HCT116 (cell line): ENCODE measurements at regions of chr6 and their contacts with region 1.

Region 1: DNA sequence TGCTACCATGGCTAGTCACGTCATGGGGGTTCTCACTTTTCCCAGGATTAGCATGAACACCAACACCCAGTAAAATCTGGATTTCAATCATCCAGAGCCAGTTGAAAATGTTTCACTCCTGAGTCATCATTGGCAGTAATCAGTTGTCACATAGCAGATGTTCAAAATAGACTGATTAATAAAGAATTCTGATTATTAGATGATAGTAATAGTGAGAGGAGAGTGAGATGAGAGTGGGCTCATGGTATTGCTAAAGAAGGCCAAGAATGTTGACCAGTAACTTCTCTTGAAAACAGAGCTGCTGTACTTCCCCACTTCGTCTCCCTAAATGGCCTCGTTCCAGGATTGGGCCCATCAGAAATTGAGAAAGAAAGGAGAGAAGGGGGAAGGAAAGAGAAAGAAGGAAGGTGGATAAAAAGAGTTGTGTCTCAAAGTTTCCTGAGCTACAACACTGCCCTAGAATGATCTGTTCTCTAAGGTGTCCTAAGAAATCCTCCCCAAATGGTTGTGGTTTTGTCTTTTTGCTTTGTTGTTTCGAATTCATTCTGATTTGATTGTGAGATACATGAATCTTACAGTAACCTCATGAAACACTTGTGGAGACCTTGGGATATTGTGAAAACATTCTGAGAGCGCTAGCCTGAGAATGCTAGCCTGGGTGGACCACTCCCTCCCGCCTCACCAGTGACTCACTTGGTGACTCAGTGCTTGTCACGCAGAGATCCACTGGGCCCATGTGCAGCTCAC is 502.2 kb upstream of the JARID2 start:
- DNase-seq: peak; percentile 94
- ATAC-seq: peak; percentile 95
- H3K4me3 ChIP-seq: peak overlapping the region in 1 of 2 experiments; percentile 33; a peak in 2 of 4 replicates
- H3K27ac ChIP-seq: peak overlapping the region; percentile 94
- H3K4me1 ChIP-seq: peaks cover 18 to 36% of the 10 kb centered on the region in 2 experiments
- H3K27me3 ChIP-seq: no peaks in the 10 kb centered on the region
- CTCF ChIP-seq: no peak
- POLR2A ChIP-seq: no peak
- RAD21 ChIP-seq: peak; percentile 19; the same call in 1 of the 2 replicates

Region 2: GRCh38 chr6:14270925-14271791 is 472.5 kb before region 1 on chr6:
- CTCF ChIA-PET with region 1: no interaction called
- POLR2A ChIA-PET with region 1: no interaction called
- RAD21 ChIA-PET with region 1: interaction called in 1 of 2 experiments, 3 read pairs
- intact Hi-C with region 1: loop called (anchors 1 kb)
- DNase-seq: peak; percentile 99
- ATAC-seq: peak; percentile 93
- H3K4me3 ChIP-seq: peak overlapping the region in 1 of 2 experiments; percentile 25; a peak in 2 of 4 replicates
- H3K27ac ChIP-seq: peak overlapping the region; percentile 72
- H3K4me1 ChIP-seq: peaks cover 26 to 52% of the 10 kb centered on the region in 2 experiments
- H3K27me3 ChIP-seq: no peaks in the 10 kb centered on the region
- CTCF ChIP-seq: no peak
- POLR2A ChIP-seq: no peak
- RAD21 ChIP-seq: peak; percentile 41

Region 3: GRCh38 chr6:15473741-15474161 is 730.1 kb after region 1 on chr6:
- CTCF ChIA-PET with region 1: no interaction called
- POLR2A ChIA-PET with region 1: no interaction called
- RAD21 ChIA-PET with region 1: no interaction called
- intact Hi-C with region 1: no loop called
- DNase-seq: no peak
- ATAC-seq: no peak
- H3K4me3 ChIP-seq: no peak overlapping the region
- H3K27ac ChIP-seq: no peak overlapping the region
- H3K4me1 ChIP-seq: no peaks in the 10 kb centered on the region
- H3K27me3 ChIP-seq: no peaks in the 10 kb centered on the region
- CTCF ChIP-seq: no peak
- POLR2A ChIP-seq: no peak
- RAD21 ChIP-seq: no peak